ENCODE measurements at regions of chr2 and their contacts with region 1.

Region 1: GRCh38 chr2:224039124-224039940 is at the start of gene SERPINE2:
- DNase-seq: peak; percentile 67 to 91
- H3K4me3 ChIP-seq: peak within 1 kb of the TSS; percentile 57
- H3K27ac ChIP-seq: no peak within 1 kb of the TSS
- H3K4me1 ChIP-seq: peaks cover 20% of the 10 kb centered on the region
- H3K27me3 ChIP-seq: no peaks in the 10 kb centered on the region
- CTCF ChIP-seq: peak; percentile 77
- total RNA-seq, gene SERPINE2: 110 and 155 TPM in 2 replicates

Region 2: GRCh38 chr2:223993621-223994232 is 45.6 kb before region 1 on chr2:
- CTCF ChIA-PET with region 1: no interaction called
- POLR2A ChIA-PET with region 1: interaction called, 12 read pairs
- intact Hi-C with region 1: loop called (anchors 1 kb)
- DNase-seq: peak; percentile 55 to 70
- H3K4me3 ChIP-seq: no peak overlapping the region
- H3K27ac ChIP-seq: no peak overlapping the region
- H3K4me1 ChIP-seq: no peaks in the 10 kb centered on the region
- H3K27me3 ChIP-seq: no peaks in the 10 kb centered on the region
- CTCF ChIP-seq: peak; percentile 98

Region 3: GRCh38 chr2:224086226-224086914 is 47.0 kb after region 1 on chr2:
- CTCF ChIA-PET with region 1: no interaction called
- POLR2A ChIA-PET with region 1: interaction called, 4 read pairs
- intact Hi-C with region 1: loop called (anchors 2 kb)
- DNase-seq: peak; percentile 70 to 99
- H3K4me3 ChIP-seq: peak overlapping the region; percentile 0; the same call in 1 of the 2 replicates
- H3K27ac ChIP-seq: peak overlapping the region; percentile 92
- H3K4me1 ChIP-seq: peaks cover 42% of the 10 kb centered on the region
- H3K27me3 ChIP-seq: no peaks in the 10 kb centered on the region
- CTCF ChIP-seq: no peak

Region 4: DNA sequence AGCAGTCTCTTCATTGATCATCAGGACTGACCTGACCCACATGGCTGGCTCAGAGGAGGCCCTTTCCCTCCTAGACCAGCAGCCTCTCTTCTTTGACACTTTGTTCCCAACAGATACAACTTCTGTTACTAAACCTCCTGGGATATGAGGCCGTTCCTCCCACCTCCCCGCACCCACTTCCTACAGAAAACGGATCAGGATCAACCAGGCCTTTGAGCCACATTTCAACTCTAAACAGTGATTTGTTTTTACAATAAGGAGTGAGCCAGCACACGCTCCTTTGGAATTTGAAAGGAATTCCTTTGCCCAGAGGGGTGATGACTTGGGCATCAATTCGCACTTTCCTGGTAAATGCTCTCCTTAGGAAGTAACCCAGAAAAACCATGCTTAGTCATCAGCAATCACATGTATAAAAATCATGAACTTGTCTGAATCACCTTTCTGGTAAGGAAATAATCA is 182.2 kb after region 1 on chr2:
- CTCF ChIA-PET with region 1: no interaction called
- POLR2A ChIA-PET with region 1: no interaction called
- intact Hi-C with region 1: loop called (anchors 1 kb)
- DNase-seq: peak; percentile 76 to 99
- H3K4me3 ChIP-seq: no peak overlapping the region
- H3K27ac ChIP-seq: peak overlapping the region; percentile 91
- H3K4me1 ChIP-seq: peaks cover 39% of the 10 kb centered on the region
- H3K27me3 ChIP-seq: no peaks in the 10 kb centered on the region
- CTCF ChIP-seq: no peak

Region 5: DNA sequence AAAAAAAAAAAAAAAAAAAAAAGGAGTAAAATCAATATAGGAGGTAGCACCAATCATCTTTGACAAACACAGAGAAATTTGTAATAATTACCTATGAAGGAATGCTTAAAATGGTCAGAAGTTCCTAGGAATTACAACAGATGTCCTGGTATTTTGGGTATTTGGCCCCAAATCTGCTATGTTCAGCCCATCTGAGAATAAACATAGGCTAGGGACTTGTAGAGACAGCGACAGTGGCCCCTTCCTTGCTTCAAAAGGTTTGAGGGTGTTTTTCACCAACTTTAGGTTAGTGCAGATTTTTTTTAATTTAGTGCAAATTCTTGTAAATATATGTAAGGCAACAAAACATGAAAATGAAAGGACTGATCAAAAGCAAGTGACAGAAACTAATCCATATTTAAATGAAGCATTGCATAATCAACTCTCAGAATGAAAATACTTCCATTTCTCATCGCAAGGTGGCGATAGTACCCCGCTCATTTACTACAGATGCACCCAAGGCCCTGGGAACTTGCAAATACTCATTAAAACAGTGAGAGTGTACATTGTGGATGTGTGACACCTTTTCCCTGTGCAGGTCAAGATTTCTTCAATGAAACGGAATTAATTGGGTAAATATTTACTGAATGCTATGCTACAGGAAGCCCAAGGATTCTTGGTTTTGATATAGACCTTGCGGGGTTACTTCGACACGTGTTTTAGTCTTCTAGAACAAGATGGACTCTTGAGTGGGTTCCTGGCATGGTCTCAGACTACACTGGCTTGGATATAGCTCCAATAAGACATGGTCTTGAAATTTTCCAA is 318.0 kb after region 1 on chr2:
- CTCF ChIA-PET with region 1: interaction called, 4 read pairs
- POLR2A ChIA-PET with region 1: no interaction called
- intact Hi-C with region 1: loop called (anchors 2 kb)
- DNase-seq: peak; percentile 72 to 77
- H3K4me3 ChIP-seq: no peak overlapping the region
- H3K27ac ChIP-seq: no peak overlapping the region
- H3K4me1 ChIP-seq: peaks cover 16% of the 10 kb centered on the region
- H3K27me3 ChIP-seq: no peaks in the 10 kb centered on the region
- CTCF ChIP-seq: peak; percentile 100